Esophagus muscularis mucosa (tissue), 4 donors: ENCODE measurements at regions of chr5 and their contacts with region 1.

Region 1: DNA sequence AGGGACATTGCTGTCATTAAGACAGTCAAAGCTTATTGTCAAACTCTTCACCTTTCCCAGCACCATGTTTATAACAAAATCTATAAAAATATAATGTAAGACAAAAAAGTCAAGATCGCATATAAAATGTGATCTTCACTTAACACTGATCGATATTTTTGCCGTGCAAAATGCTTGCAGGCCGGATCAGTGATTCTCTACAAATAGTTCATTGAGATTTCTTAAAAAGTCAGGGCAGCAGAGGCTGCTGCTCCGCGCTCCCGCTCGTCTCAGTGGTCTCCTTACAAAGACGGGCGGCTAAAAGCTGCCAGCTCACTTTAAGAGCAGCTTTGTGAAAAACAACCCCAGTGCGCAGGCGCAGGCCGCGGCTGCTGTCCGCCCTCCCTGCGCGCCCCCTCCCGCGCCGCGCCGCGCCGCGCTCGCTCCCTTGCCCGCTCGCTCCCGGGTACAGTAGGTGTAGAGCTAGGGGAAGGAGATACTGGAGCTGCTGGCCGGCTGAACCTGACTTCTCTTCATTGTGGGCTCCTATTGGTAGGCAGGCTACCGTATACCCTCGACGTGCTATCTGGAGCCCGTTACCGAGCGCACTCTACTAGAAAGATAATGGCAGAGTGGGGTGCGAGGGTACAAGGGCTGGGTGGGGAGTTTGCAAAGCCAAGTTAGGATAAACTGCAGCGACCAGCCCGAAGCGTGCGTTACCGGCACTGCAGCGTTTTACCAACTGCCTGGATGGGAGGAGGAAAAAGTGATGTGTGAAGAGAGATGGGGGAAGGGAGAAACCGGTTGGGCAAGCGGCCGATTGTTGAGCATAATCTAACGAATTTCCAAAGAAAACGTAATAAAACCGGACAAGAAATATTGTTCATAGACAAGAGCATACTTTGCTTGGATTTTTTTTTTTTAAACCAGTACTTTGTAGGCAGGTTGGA is at the start of gene ARRDC3:
- DNase-seq: peak; percentile 99
- H3K4me3 ChIP-seq: peak within 1 kb of the TSS; percentile 69 to 85 (median 71)
- H3K27ac ChIP-seq: peak within 1 kb of the TSS; percentile 90 to 99 (median 94)
- H3K4me1 ChIP-seq: peaks cover 9 to 22% (median 18%) of the 10 kb centered on the region in 4 donors
- H3K27me3 ChIP-seq: no peaks in the 10 kb centered on the region
- CTCF ChIP-seq: no peak
- EP300 ChIP-seq: no peak
- POLR2A ChIP-seq: peak; percentile 98
- total RNA-seq, gene ARRDC3: 37.0 to 58.2 (median 43.1) TPM

Region 2: DNA sequence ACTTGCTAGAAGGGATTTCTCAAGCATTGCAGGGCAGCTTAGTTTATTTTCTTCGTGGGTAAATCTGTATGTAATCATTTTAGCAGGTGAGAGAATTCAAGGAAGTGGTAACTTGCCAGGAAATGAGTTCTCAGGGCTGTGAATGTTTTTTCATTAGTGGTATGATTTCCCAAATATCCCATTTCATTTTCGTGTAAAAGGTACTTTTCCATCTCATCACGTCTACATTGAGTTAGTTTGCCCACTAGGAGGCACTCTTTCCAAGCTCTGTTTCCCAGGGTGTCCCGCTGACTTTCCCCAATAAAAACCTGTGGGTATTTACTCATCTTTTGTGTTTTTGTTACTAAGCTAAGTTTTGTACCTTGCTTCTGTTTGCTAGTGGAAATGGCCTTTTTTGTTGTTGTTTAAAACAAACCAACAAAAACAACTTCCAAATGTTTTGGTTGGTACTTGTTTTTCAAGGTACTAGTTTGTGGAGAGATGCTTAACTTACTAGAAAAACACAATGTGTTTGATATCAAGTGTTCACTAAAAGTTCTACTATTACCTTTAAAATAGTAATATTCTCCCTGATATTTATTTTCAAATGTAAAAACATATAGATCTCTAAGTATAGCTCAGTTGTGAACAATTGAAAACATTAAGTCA is 451.1 kb before region 1 on chr5:
- intact Hi-C with region 1: loop called (anchors 2 kb)
- DNase-seq: no peak
- H3K4me3 ChIP-seq: no peak overlapping the region
- H3K27ac ChIP-seq: no peak overlapping the region
- H3K4me1 ChIP-seq: peaks cover 0 to 22% (median 11%) of the 10 kb centered on the region in 4 donors
- H3K27me3 ChIP-seq: no peaks in the 10 kb centered on the region
- CTCF ChIP-seq: peak; percentile 77 to 82 (median 80)
- EP300 ChIP-seq: no peak
- POLR2A ChIP-seq: no peak

Region 3: GRCh38 chr5:91151947-91152346 is 231.3 kb before region 1 on chr5:
- intact Hi-C with region 1: loop called (anchors 5 kb)
- DNase-seq: no peak
- H3K4me3 ChIP-seq: no peak overlapping the region
- H3K27ac ChIP-seq: peak overlapping the region in 2 of 4 donors; percentile 16 to 20
- H3K4me1 ChIP-seq: peaks cover 14 to 38% (median 29%) of the 10 kb centered on the region in 4 donors
- H3K27me3 ChIP-seq: no peaks in the 10 kb centered on the region
- CTCF ChIP-seq: no peak
- EP300 ChIP-seq: no peak
- POLR2A ChIP-seq: no peak

Region 4: DNA sequence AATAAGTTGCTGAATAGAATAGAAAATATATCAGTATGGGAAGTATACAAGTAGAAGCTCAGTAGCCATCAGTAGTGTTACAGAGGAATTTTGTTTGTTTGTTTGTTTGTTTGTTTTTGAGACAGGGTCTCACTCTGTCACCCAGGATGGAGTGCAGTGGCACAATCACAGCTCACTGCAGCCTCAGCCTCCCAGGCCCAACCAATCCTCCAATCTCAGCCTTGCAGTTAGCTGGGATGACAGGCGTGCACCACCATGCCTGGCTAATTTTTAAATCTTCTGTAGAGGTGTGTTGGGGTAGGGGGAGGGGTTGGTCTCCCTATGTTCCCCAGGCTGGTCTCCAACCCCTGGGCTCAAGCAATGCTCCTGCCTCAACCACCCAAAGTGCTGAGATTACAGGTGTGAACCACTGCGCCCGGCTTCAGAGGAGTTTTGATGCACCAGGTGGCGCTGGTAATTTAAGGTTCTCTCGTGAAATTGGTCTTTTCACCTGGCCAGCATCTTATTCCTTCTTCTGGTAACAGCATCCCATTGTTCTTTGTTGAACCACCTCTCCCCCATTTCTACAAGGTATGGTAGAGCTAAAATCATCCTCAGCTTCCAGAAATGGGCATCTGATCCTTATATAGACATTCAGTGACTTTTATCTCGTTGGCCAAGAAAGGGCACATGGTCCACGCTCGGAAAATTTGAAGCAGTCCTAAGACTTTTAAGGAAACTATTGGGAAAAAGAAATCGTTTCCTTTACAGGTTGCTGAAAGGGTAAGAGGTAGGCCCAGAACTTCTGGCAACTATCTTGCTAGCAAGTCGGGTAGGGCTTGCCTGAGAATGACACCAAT is 157.2 kb before region 1 on chr5:
- intact Hi-C with region 1: loop called (anchors 5 kb)
- DNase-seq: no peak
- H3K4me3 ChIP-seq: no peak overlapping the region
- H3K27ac ChIP-seq: no peak overlapping the region
- H3K4me1 ChIP-seq: no peaks in the 10 kb centered on the region
- H3K27me3 ChIP-seq: no peaks in the 10 kb centered on the region
- CTCF ChIP-seq: peak in 1 of 3 experiments; percentile 38
- EP300 ChIP-seq: no peak
- POLR2A ChIP-seq: no peak

Region 5: DNA sequence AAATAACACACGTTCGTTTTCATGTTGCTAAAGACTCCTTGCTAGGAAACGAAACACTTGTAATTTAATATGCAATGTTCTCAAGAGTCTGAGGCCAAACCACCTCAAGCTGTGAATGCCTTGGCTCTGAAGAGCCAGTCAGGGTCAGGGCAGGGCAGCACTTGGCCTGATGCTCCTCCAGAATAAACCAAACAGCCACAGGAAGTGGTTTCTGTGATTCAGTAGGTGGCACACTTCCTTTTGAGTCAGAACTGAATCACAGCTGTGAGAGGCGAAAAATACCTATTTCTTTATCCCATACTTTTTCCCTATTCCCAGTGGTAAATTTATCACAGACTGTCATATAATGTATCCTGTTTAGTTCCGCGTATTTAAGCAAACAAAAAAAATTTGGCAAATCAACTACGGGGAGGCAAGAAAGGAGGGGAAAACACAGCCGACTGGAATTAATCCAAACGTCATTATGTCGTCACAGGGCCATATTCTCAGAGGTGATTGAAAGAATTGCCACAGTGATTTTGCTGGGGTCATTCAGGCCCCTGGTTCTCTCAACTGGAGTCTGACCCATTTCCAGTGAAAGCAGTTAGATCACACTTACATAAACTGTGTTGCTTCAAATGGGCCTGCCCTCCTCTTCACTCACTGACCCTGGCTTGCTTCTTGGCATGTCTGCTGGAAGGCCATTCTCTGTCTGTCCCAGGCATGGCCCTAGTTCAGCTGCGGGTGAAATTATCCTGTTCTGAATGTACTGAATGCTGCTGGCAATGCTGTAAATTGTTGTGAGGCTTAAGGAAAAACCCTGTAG is 71.4 kb before region 1 on chr5:
- intact Hi-C with region 1: loop called (anchors 2 kb)
- DNase-seq: peak; percentile 95
- H3K4me3 ChIP-seq: no peak overlapping the region
- H3K27ac ChIP-seq: peak overlapping the region; percentile 76 to 81 (median 79)
- H3K4me1 ChIP-seq: peaks cover 39 to 47% (median 41%) of the 10 kb centered on the region in 4 donors
- H3K27me3 ChIP-seq: no peaks in the 10 kb centered on the region
- CTCF ChIP-seq: peak in 1 of 3 experiments; percentile 12
- EP300 ChIP-seq: no peak
- POLR2A ChIP-seq: no peak

Region 6: DNA sequence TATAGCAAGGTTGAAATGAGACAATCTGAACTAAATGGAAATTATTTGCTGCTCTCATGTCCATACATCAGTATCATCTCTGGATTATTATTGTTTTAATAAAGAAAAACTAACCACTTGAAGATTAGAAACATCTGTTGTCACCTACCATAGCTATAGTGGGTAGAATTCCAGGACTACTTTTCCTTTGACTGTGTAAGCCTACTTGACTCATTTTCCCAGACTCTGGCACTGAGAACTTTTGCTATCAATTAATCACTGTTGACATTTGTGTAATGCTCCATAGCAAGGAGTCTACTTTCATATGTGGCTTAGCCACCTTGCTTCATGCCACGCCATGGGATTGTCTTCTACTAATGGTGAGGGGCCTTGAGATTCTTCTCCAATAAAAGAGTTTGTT is 59.7 kb after region 1 on chr5:
- intact Hi-C with region 1: no loop called
- DNase-seq: no peak
- H3K4me3 ChIP-seq: no peak overlapping the region
- H3K27ac ChIP-seq: no peak overlapping the region
- H3K4me1 ChIP-seq: no peaks in the 10 kb centered on the region
- H3K27me3 ChIP-seq: no peaks in the 10 kb centered on the region
- CTCF ChIP-seq: no peak
- EP300 ChIP-seq: no peak
- POLR2A ChIP-seq: no peak

Region 7: GRCh38 chr5:91521334-91521733 is 138.0 kb after region 1 on chr5:
- intact Hi-C with region 1: no loop called
- DNase-seq: no peak
- H3K4me3 ChIP-seq: no peak overlapping the region
- H3K27ac ChIP-seq: no peak overlapping the region
- H3K4me1 ChIP-seq: no peaks in the 10 kb centered on the region
- H3K27me3 ChIP-seq: no peaks in the 10 kb centered on the region
- CTCF ChIP-seq: no peak
- EP300 ChIP-seq: no peak
- POLR2A ChIP-seq: no peak